Head of caudate nucleus (tissue), 42 donors: ENCODE measurements at regions of chr21 and their contacts with region 1.

Region 1: DNA sequence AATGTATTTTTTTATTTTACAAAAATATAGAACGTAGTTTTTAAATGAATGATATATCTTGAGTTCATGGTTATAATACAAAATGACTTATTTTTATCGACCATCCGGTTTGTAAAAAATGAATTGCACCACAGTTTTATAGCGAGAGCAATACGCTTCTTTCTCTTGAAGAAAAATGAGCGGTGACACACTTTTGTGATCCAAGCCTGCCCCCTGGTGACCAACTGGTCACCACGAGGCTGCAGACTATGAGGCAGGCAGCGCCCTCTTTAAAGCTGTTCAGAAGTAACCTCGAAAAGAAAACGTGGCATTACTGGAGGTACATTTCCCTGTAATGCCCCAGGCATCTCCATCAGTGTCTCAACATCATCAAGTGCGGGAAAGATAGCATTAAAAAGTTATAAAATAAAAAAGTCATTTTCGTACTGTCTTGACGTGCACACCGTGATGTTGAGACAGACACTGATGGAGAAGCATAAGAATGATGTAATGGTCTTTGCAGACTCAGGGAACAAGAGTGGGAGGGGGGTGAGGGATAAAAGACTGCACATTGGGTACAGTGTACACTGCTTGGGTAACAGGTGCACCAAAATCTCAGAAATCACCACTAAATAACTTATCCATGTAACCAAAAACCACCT is 734.2 kb upstream of the ADAMTS5 start:
- DNase-seq: peak; percentile 76 to 95 (median 89)

Region 2: DNA sequence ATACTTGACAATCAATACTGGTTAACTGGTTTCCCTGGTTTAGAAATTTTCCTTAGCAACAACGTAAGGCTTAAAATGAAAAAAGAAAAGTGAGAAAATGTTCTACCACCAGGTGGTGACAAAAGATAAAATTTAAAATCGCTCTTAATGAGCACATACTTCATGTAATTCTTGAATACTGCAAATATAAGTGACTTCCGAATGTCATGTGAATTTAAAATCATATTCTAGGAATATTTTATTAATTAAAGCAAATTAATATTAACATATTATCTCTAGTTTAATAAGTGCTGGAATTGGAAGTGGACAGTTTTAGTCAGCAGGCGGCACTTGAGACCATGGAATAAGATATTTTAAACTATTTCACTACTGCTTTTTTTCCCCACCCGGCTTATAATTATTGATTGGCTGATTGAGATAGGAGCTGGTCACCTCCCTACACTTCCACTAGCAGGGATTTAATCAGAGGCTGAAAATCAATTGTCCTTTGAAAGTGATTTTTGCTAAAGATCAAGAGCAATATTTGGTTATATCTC is 850.9 kb before region 1 on chr21:
- intact Hi-C with region 1: loop called (anchors 5 kb)
- DNase-seq: no peak

Region 3: DNA sequence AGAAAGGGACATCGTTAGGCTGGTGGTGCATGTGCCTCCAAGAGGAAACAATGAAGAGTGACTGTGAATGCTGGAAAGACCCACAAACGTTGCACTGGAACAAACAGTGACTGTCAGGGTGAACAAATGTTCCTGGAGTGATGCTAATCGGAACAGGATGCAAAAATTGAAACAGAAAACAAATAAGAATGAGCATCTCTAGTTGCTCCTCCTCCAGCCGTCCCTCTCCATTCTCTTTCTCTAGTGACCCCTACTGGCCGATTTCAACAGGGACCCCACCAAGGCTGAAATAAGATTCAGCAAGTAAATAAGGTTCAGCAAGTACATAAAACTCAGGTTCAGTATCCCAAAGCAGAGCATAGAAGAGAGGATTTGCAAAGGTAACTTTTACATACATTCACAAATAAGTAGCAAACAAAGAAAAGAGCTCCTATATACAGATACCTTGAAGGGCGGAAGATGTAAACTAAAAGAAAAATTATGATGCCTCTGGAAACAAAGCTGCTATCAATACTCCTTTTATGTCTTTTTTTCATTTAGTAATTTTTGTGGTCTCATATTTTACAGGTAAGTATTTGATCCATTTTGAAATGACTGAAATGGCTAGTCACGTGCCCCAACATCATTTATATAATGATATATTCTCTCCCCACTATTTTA is 101.9 kb after region 1 on chr21:
- intact Hi-C with region 1: loop called (anchors 5 kb)
- DNase-seq: peak in 38 of 42 donors; percentile 13 to 87 (median 56)

Region 4: GRCh38 chr21:28336314-28336713 is 635.2 kb after region 1 on chr21:
- intact Hi-C with region 1: loop called (anchors 5 kb)
- DNase-seq: peak in 22 of 42 donors; percentile 6 to 73 (median 31)